ENCODE measurements at regions of chr19 and their contacts with region 1.

Region 1: DNA sequence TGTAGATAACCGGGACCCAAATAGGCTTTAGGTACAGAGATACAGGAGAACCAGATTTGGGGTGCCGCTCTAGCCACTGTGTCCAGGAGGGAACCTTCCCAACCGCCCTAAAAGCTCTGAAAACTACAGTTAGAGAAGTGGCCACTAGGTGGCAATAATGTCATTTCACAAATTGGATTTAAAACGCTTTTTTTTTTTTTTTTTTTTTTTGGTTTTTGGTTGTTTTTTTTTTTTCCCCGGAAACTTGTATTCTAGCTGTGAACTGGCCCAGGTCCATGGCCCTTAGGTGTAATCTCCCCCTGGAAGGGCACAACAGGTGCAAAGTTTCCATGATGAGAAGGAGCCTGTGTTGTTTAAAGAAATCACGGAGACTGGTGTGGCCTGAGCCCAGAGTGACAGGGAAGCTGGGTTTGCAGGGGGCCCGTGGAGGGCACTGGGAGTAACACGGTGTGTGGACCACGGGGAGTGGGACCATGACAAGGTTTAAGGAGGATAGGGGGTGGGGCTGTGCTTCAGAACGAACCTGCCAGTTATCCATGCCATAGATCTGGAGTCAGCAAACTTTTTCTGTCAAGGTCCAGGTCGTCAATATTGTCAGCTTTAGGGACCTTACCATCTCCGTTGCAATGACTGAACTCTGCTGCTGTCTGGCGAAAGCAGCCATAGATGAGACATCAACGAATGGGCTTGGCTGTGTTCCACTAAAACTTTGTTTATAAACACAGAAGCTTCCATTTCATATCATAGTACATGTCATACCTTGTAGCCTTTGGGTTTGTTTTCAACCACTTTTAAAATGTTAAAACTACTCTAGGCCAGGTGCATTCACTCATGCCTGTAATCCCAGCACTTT is 10.1 kb downstream of the OR1I1 start:
- DNase-seq: peak in 1 of 10 donors; percentile 52

Region 2: DNA sequence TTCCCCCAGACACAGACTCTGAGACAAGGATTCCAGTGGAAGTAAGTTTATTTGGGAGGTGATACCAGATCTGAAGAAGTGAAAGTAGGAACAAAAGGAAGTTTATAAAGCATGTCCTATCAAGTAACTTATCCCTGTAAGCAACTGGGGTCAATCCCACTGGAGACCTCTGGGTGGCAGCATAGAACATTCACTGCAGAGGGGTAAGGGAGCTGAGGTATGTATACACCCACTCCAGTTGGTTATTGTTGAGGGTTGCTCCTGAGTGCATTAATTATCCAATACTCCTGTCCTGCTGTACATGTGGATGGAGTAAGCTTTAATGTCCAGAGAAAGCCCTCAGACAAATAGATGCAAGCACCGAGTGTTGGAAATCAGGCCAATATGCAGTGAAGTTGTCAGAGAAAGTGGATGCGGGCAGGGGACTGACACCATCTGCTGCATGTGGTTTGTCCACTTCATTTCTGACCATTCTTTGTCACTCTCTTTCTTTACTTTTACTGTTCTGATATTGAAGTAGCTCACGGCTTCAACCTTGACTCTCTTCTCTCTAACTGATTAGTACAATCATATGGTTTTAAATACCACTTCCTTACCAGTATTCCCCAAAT is 62.0 kb after region 1 on chr19:
- intact Hi-C with region 1: loop called (anchors 1 kb)
- DNase-seq: no peak

Region 3: GRCh38 chr19:15251749-15252397 is 159.7 kb after region 1 on chr19:
- intact Hi-C with region 1: loop called (anchors 10 kb)
- DNase-seq: peak in 2 of 10 donors; percentile 79 to 92

Region 4: DNA sequence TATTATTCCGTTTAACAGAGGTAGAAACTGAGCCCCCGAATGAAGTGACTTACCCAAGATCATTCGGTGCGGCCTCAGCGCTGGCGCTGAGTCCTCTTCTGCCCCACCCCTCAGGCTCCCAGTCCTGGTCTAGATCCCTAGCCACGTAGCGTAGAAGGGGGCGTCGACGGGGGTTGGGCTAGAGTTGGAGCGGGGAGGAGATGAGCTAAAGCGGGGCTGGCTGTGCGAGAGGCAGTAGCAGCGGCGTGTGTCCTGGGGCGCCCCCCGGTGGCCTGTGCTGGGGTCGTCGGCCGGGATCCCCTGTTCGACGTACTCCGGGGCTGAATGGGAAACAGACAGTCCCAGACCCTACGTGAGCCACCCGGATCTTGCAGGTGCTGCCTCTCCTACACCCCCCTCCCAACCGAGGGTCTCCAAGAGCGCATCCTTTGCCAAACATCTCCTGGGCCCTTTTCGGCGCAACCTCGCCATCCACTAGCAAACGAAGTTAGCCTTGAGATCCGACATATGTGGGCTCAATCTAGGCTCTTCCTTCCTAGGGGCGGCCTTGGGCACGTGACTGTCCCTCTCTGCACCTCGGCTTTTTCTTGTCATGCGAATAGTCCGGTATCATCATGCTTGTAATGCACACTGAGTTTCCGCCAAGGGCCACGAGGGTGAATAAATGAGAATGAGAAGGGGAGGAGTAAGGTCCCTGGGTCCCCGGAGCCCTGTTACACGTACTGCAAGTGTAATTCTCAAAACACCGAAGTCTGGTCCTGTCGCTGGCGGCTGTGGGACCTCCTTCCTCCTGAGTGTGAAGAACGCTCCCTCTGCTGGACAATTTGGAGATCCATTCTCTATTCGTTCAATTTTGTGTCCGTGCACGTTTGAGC is 463.9 kb after region 1 on chr19:
- intact Hi-C with region 1: loop called (anchors 2 kb)
- DNase-seq: peak; percentile 47 to 95 (median 76)